Endothelial cell of umbilical vein (primary cell): ENCODE measurements at regions of chr7 and their contacts with region 1.

Region 1: GRCh38 chr7:33932832-33933468 is 27.6 kb downstream of the BMPER start:
- DNase-seq: peak; percentile 85
- H3K4me3 ChIP-seq: peak overlapping the region in 2 of 3 experiments; percentile 13 to 17
- H3K27ac ChIP-seq: no peak overlapping the region
- H3K4me1 ChIP-seq: no peaks in the 10 kb centered on the region
- H3K27me3 ChIP-seq: peaks cover 0 to 1% of the 10 kb centered on the region in 2 experiments
- CTCF ChIP-seq: peak; percentile 95
- POLR2A ChIP-seq: no peak

Region 2: GRCh38 chr7:33243319-33243881 is 689.5 kb before region 1 on chr7:
- CTCF ChIA-PET with region 1: interaction called, 229 read pairs
- POLR2A ChIA-PET with region 1: no interaction called
- dilution Hi-C with region 1: no loop called
- intact Hi-C with region 1: loop called (anchors 1 kb)
- DNase-seq: peak; percentile 65
- H3K4me3 ChIP-seq: no peak overlapping the region
- H3K27ac ChIP-seq: no peak overlapping the region
- H3K4me1 ChIP-seq: no peaks in the 10 kb centered on the region
- H3K27me3 ChIP-seq: no peaks in the 10 kb centered on the region
- CTCF ChIP-seq: peak; percentile 39 to 42
- POLR2A ChIP-seq: no peak

Region 3: GRCh38 chr7:33459340-33459751 is 473.6 kb before region 1 on chr7:
- CTCF ChIA-PET with region 1: interaction called, 32 read pairs
- POLR2A ChIA-PET with region 1: no interaction called
- dilution Hi-C with region 1: no loop called
- intact Hi-C with region 1: loop called (anchors 1 kb)
- DNase-seq: peak; percentile 74
- H3K4me3 ChIP-seq: no peak overlapping the region
- H3K27ac ChIP-seq: no peak overlapping the region
- H3K4me1 ChIP-seq: no peaks in the 10 kb centered on the region
- H3K27me3 ChIP-seq: no peaks in the 10 kb centered on the region
- CTCF ChIP-seq: peak; percentile 38 to 59
- POLR2A ChIP-seq: no peak

Region 4: DNA sequence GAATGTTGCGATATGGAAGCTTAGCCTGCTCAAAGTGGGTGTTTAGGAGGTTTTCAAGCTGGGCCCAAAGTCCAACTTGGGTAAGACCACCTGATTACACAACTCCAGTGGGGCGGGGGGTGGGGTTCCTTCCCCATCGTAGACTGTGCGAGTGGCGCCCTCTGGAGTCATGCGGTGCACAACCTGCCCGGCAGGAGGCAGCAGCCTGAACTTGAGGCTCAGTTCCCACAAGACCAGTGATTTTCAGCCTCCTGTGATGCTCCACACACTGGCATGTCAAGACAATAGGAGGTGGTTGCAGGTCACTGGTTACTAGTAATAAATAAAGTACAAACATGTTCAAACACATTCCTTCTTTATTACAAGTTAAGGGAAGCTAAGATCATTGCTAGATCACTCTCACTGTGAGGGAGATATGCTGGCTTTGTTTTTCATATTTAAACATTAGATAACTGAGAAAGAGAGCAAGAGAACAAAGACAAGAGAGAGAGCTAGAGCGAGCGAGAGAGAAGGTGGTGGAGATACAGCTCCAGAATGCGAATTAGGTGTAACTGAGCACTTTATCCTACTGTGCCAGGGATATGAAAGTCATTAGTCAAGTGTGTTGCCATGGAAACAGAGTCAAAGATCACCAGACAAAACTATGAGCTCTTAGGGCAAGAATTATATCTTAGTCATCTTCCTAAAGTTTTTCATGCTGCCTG is 125.0 kb before region 1 on chr7:
- CTCF ChIA-PET with region 1: interaction called, 12 read pairs
- POLR2A ChIA-PET with region 1: no interaction called
- dilution Hi-C with region 1: no loop called
- intact Hi-C with region 1: no loop called
- DNase-seq: peak; percentile 91
- H3K4me3 ChIP-seq: no peak overlapping the region
- H3K27ac ChIP-seq: peak overlapping the region; percentile 81
- H3K4me1 ChIP-seq: peaks cover 27% of the 10 kb centered on the region
- H3K27me3 ChIP-seq: no peaks in the 10 kb centered on the region
- CTCF ChIP-seq: peak; percentile 62 to 66
- POLR2A ChIP-seq: no peak

Region 5: GRCh38 chr7:33841705-33842129 is 91.2 kb before region 1 on chr7:
- CTCF ChIA-PET with region 1: no interaction called
- POLR2A ChIA-PET with region 1: no interaction called
- dilution Hi-C with region 1: no loop called
- intact Hi-C with region 1: no loop called
- DNase-seq: peak; percentile 5
- H3K4me3 ChIP-seq: no peak overlapping the region
- H3K27ac ChIP-seq: no peak overlapping the region
- H3K4me1 ChIP-seq: no peaks in the 10 kb centered on the region
- H3K27me3 ChIP-seq: no peaks in the 10 kb centered on the region
- CTCF ChIP-seq: no peak
- POLR2A ChIP-seq: no peak

Region 6: GRCh38 chr7:33946094-33946700 is 13.2 kb after region 1 on chr7:
- CTCF ChIA-PET with region 1: interaction called, 27 read pairs
- POLR2A ChIA-PET with region 1: no interaction called
- dilution Hi-C with region 1: no loop called
- intact Hi-C with region 1: no loop called
- DNase-seq: no peak
- H3K4me3 ChIP-seq: no peak overlapping the region
- H3K27ac ChIP-seq: no peak overlapping the region
- H3K4me1 ChIP-seq: no peaks in the 10 kb centered on the region
- H3K27me3 ChIP-seq: no peaks in the 10 kb centered on the region
- CTCF ChIP-seq: no peak
- POLR2A ChIP-seq: no peak

Region 7: DNA sequence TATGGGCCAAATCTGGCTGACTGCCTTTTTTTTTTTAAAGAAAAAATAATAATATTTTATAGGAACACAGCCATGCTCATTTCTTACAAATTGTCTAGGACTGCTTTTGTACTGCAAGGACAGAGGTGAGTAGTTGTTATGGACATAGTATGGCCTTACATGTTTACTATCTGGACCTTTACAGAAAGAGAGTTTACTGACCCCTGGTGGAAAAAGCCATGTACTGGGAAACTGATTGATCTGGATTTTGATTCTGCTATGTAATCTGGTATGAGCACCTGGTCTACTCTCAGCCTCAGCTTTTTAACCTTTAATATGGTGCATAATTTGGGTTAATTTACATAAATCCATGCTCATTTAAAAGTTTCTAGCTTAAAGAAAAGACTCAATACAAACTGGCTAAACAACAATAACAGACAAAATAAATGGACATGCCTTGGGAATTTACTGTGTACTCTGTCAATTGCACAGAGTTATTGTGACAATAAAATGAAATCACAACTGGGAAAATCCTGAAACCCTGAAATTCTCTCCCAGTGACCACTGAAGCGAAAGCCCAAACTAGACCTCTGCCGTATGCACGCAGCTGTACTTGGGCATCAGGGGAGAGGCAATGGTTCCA is 233.1 kb after region 1 on chr7:
- CTCF ChIA-PET with region 1: no interaction called
- POLR2A ChIA-PET with region 1: no interaction called
- dilution Hi-C with region 1: no loop called
- intact Hi-C with region 1: no loop called
- DNase-seq: peak; percentile 37
- H3K4me3 ChIP-seq: no peak overlapping the region
- H3K27ac ChIP-seq: no peak overlapping the region
- H3K4me1 ChIP-seq: no peaks in the 10 kb centered on the region
- H3K27me3 ChIP-seq: peaks cover 0 to 2% of the 10 kb centered on the region in 2 experiments
- CTCF ChIP-seq: peak; percentile 37 to 59
- POLR2A ChIP-seq: no peak